Activated T-helper 1 cell treated with anti-CD3 and anti-CD28 coated beads, Interleukin-12 subunit alpha, Interleukin-12 subunit beta, Interleukin-2, Interleukin-4 antibody, amounts not matched to agents 30 ng/mL and 10 ng/mL and 1 ng/mL, durations not matched to agents 14 hours and 24 hours and 36 hours (primary cell): ENCODE measurements at regions of chr4 and their contacts with region 1.

Region 1: DNA sequence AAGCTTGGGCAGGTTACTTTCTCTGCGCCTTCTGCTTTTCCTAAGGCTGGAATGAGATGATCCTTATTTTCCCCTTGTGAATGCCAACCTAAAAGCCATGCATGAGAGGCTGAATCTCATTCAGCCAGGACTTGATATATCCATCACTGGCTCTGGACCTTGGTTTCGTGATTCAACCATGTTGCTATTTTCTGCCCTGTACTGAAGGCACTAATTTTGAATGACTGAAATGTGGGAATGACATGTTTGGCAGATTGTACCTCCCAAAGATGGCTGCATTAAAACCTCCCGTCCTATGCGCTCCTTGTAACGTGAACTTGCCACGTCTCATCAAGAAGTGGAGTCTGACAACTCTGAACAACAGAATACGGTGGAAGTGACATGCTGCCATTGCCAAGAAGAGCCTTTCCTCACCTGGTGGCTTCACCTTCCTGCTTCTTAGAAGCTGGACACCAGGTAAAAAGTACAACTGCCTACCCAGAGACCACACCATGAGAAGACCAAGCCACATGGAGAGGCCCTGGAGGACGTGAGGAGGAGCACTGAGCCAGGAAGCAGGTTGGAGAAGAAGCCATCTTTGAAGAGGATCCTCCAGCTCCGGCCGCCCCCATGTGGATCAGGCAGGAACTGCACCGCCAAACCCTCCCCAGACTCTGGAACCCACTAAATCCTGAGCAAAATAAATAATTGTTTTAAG is 174.5 kb downstream of the NSUN7 start:
- DNase-seq: peak; percentile 45
- H3K4me3 Mint-ChIP-seq: no peak overlapping the region
- H3K27ac Mint-ChIP-seq: peak overlapping the region; percentile 77
- H3K4me1 Mint-ChIP-seq: peaks cover 19% of the 10 kb centered on the region
- H3K27me3 Mint-ChIP-seq: peaks cover 10% of the 10 kb centered on the region

Region 2: GRCh38 chr4:40710502-40711254 is 213.6 kb before region 1 on chr4:
- intact Hi-C with region 1: no loop called
- DNase-seq: no peak
- H3K4me3 Mint-ChIP-seq: no peak overlapping the region
- H3K27ac Mint-ChIP-seq: no peak overlapping the region
- H3K4me1 Mint-ChIP-seq: peaks cover 21% of the 10 kb centered on the region
- H3K27me3 Mint-ChIP-seq: peaks cover 4% of the 10 kb centered on the region

Region 3: DNA sequence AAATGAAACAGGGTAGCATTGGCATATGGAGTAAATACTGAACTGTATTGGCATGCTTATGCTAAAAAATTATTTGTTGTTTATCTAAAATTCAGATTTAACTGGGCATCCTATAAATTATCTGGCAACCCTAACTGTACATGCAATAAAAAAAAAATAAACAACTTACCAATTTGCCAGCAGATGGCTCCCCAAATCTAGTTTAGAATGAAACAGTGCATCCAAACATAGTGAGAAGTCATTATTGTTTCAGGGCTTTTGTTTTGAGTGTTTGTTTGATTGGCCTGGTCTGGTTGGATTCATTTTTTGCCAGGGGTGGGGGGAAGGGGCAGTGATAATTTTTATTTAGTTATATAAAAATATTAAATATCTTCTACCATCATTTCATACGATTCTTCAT is 187.3 kb before region 1 on chr4:
- intact Hi-C with region 1: loop called (anchors 1 kb)
- DNase-seq: no peak
- H3K4me3 Mint-ChIP-seq: no peak overlapping the region
- H3K27ac Mint-ChIP-seq: no peak overlapping the region
- H3K4me1 Mint-ChIP-seq: peaks cover 22% of the 10 kb centered on the region
- H3K27me3 Mint-ChIP-seq: peaks cover 10% of the 10 kb centered on the region

Region 4: DNA sequence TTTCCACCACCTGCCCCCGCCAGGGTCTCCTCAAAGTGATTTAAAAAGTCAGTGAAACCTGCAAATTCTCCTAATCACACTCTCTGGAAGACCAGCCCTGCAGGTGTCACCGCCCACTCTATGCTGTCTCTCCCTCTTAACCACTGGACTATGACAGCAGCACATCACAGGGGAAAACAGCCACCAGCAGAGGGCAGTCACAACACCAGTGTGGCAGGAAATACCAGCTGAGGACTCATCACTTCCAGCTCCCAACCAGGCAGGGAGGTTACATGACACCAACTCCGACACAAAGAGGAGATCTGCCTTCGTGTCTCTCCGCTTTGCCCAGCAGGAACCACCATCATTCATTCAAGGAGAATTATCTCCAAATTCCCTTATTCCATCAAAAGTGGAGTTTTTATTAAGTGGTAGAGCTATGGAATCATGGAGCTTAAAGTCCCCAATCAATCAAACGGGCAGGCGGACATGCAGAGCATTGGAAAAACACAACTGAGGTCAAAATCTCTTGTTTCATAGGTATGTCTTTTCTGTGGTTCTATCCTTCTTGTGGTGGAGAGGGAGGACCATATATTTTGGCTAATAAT is 83.2 kb before region 1 on chr4:
- intact Hi-C with region 1: loop called (anchors 1 kb)
- DNase-seq: peak; percentile 59
- H3K4me3 Mint-ChIP-seq: no peak overlapping the region
- H3K27ac Mint-ChIP-seq: no peak overlapping the region
- H3K4me1 Mint-ChIP-seq: peaks cover 8% of the 10 kb centered on the region
- H3K27me3 Mint-ChIP-seq: peaks cover 3% of the 10 kb centered on the region

Region 5: GRCh38 chr4:40856822-40857362 is 67.4 kb before region 1 on chr4:
- intact Hi-C with region 1: no loop called
- DNase-seq: peak; percentile 57
- H3K4me3 Mint-ChIP-seq: peak overlapping the region; percentile 76
- H3K27ac Mint-ChIP-seq: no peak overlapping the region
- H3K4me1 Mint-ChIP-seq: peaks cover 15% of the 10 kb centered on the region
- H3K27me3 Mint-ChIP-seq: peaks cover 35% of the 10 kb centered on the region

Region 6: DNA sequence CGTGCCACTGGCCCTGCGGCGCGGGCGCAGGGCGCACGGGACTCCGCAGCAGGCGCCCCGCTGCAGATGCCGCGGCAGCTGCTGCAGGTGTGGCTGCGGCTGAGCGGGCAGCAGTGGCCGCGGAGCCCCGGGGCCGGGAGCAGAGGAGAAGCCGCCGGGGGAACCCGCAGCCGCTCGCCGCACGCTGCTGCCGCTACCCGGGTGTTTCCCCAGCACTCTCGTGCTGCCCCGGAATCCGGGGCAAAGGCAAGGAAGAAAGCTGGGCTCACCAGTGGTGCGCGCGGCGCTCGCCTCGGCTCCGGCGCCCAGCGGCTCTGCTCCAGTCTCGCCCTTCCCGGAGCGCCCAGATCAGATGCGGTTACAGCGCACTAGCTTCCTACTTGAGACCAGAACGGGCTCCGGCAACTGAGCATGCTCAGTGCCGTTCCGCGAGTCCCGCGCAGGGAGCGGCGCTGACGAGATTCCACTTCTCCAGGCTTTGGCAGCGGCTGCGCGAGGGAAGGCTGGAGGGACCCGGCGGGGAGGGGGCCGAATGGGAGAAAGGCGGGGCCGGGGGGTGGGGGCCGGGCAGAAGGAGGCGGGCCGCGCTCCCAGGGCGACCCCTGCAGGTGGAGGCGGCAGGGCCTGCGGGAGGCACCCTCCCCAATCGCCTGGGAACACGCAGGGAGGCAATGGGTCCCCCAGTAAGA is 290.0 kb after region 1 on chr4 and contains the start of gene APBB2:
- intact Hi-C with region 1: loop called (anchors 1 kb)
- DNase-seq: peak; percentile 27
- H3K4me3 Mint-ChIP-seq: peak within 1 kb of the TSS; percentile 80
- H3K27ac Mint-ChIP-seq: no peak within 1 kb of the TSS
- H3K4me1 Mint-ChIP-seq: peaks cover 27% of the 10 kb centered on the region
- H3K27me3 Mint-ChIP-seq: peaks cover 42% of the 10 kb centered on the region
- total RNA-seq, gene APBB2: 11.0 and 11.3 TPM in 2 replicates

Region 7: DNA sequence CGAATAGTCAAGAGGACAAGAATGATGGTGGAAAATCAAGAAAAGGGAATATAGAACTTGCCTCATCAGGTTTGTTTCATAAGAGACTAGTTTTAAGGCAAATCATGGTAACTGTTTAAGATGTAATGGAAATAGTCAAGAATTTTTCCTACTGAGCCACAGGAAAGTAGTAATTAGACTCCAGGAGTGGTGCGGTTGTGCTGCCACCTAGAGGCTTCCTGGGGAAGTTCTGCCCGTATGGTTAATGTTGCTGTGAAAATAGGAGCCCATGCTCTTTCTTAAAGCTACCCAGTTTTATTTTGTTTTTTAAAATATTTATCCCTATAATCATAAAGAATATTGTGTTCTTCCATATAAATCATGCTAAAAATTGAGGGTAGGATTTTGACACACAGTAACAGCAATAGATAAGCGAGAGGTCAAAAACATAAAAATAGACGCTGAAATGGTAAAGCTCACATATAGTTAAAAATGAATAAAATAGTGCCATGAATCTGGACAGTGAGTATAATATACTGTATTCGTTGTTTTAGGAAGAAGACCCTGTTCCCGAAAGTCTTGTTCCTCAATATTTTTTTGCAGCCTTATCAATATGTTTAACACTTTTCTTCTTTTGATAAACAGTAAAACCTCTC is 737.3 kb after region 1 on chr4:
- intact Hi-C with region 1: loop called (anchors 1 kb)
- DNase-seq: no peak
- H3K4me3 Mint-ChIP-seq: no peak overlapping the region
- H3K27ac Mint-ChIP-seq: no peak overlapping the region
- H3K4me1 Mint-ChIP-seq: no peaks in the 10 kb centered on the region
- H3K27me3 Mint-ChIP-seq: no peaks in the 10 kb centered on the region